ENCODE measurements at regions of chr4 and their contacts with region 1.

Region 1: DNA sequence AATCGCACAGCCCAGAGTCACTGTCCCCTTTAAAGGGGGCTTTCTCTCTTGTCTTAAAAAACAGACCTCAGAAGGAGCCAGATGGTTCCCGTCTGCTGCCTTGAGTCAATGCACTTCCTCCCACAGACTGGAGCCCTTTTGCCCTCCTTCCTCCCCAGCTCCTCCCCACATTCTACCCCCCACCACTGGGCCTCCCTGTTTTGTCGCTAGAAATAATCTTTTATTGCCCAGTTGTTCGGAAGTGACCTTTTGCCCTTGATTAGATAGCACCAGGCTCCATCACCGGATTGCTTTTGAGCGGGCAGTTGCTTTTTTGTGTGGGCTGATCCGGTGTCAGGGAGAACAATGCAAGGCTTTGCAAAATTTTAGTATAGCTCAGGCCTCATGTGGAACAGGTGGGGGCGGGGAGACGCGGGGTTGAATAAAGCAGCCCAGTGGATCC is 47.7 kb downstream of the SPRY1 start:
- DNase-seq: peak in 6 of 9 donors; percentile 1 to 48 (median 10)
- ATAC-seq: peak; percentile 81
- H3K4me3 ChIP-seq: peak overlapping the region; percentile 13
- H3K4me3 Mint-ChIP-seq: peak overlapping the region; percentile 41 to 82 (median 62)
- H3K27ac ChIP-seq: no peak overlapping the region
- H3K27ac Mint-ChIP-seq: peak overlapping the region in 6 of 9 donors; percentile 4 to 82 (median 41)
- H3K4me1 ChIP-seq: peaks cover 0 to 6% of the 10 kb centered on the region in 2 donors
- H3K4me1 Mint-ChIP-seq: peaks cover 7 to 28% (median 17%) of the 10 kb centered on the region in 7 donors
- H3K27me3 ChIP-seq: no peaks in the 10 kb centered on the region
- H3K27me3 Mint-ChIP-seq: peaks cover 0 to 2% (median 0%) of the 10 kb centered on the region in 5 donors

Region 2: GRCh38 chr4:123421937-123422781 is 22.2 kb before region 1 on chr4:
- CTCF ChIA-PET with region 1: no interaction called
- POLR2A ChIA-PET with region 1: no interaction called
- intact Hi-C with region 1: loop called in 1 of 2 experiments (anchors 1 kb)
- DNase-seq: no peak
- ATAC-seq: peak; percentile 49
- H3K4me3 ChIP-seq: peak overlapping the region; percentile 14
- H3K4me3 Mint-ChIP-seq: peak overlapping the region; percentile 35 to 86 (median 72)
- H3K27ac ChIP-seq: peak overlapping the region; percentile 58
- H3K27ac Mint-ChIP-seq: peak overlapping the region in 6 of 9 donors; percentile 32 to 95 (median 63)
- H3K4me1 ChIP-seq: no peaks in the 10 kb centered on the region
- H3K4me1 Mint-ChIP-seq: peaks cover 5 to 66% (median 12%) of the 10 kb centered on the region in 7 donors
- H3K27me3 ChIP-seq: no peaks in the 10 kb centered on the region
- H3K27me3 Mint-ChIP-seq: peaks cover 0 to 8% (median 0%) of the 10 kb centered on the region in 5 donors

Region 3: DNA sequence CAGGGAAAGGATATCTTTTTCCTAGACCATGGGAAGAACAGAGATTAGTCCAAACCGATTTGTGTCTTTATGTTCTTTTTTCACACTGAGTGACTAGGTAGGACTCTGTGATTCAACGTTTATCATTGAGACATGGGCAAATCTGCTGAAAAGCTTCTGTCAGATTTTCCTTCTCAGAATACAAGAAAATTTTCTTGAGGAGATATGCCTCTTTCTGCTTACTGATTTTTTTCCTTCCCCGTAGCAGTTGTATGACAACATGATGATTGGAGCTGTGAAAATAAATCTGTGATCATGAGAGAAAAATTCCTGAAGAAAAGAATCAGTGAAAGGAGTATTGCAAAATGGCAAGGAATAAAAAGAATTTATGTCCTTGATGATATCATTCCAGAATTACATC is 1739.8 kb after region 1 on chr4:
- CTCF ChIA-PET with region 1: no interaction called
- POLR2A ChIA-PET with region 1: no interaction called
- intact Hi-C with region 1: no loop called
- DNase-seq: no peak
- ATAC-seq: no peak
- H3K4me3 ChIP-seq: no peak overlapping the region
- H3K4me3 Mint-ChIP-seq: no peak overlapping the region
- H3K27ac ChIP-seq: no peak overlapping the region
- H3K27ac Mint-ChIP-seq: no peak overlapping the region
- H3K4me1 ChIP-seq: no peaks in the 10 kb centered on the region
- H3K4me1 Mint-ChIP-seq: no peaks in the 10 kb centered on the region
- H3K27me3 ChIP-seq: no peaks in the 10 kb centered on the region
- H3K27me3 Mint-ChIP-seq: no peaks in the 10 kb centered on the region